Head of caudate nucleus (tissue), 42 donors: ENCODE measurements at regions of chr1 and their contacts with region 1.

Region 1: DNA sequence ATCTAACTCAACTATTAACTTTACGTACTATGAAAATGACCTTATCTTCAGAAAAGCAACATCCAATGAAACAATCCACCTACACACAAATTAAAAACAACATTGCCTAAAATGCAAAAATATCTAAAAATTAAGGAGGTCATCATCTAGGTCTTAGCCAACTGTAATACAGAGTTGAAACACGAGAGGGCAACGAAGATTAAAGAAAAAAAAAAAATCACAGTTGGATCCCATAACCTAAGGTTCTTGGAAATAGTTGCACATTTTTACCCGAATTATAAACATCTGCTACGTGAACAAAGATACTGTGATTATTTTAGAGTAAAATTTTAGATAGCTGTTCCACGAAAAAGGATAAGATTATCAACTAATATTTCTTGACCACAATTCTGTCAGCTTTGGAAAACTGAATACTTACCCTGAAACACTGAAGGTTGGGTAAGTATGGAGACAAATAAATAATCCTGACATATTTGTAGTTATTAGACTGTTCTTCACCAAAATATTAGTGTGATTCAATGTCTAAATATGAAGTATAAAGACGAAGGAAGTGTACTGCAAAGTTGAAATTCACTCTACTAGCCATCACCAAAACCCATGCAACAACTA is 88.0 kb upstream of the AK4 start:
- DNase-seq: no peak

Region 2: DNA sequence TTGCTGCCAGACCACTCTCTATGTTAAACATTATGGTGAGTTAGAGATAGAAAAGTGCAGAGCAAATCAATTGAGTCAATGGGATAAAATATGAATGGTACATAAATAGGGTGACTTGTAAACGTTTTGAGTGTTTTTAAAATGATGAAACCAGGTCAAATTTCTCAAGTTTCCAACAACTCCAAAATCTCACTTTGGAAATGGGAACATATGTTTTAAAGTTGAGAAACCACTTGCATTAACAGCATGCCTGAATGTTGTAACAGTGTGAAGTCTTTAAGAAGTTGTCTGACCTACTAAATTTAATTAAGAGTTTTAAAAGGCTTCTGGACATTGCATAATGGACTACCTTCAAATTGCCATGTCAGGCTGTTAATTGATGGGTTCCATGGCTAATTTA is 348.8 kb before region 1 on chr1:
- intact Hi-C with region 1: no loop called
- DNase-seq: no peak

Region 3: GRCh38 chr1:65108025-65108642 is 48.1 kb after region 1 on chr1:
- intact Hi-C with region 1: no loop called
- DNase-seq: no peak

Region 4: DNA sequence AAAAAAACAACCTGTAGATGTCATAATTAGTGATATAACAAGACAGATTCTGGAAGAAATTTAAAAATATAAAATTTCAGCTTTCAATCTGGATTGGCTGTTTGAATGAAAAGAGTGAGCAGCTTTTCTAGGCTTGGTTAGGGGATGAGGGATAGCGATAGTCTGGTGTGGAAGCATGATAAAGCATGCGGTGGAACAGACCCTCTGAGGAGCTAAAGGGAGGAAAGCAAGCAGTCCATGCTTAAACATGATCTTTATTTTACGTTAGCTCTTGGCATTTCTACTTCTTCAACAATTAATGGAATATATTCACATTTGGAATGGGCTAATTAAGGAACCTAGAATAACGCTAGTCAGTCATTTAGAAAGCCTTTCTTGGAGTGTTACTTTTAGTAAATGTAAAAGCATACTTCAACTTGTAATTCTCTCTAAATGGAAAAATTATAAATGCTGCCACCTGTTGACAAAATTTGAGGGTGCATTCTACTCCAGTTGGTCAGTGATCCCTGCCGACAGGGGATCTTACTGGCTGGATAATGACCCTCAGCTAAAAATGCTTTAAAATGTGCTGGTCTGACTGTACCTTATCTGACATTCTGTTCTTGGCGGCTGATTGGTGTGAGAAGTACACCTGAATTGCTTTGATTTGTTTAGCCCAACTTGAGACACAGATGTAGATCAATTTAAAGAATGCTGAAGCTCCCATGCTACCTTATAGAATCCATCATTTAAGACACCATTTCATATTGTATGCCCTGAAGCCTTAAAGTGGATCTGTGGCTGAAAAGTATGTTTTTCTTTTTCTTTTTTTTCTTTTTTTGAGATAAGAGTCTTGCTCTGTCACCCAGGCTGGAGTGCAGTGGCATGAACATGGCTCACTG is 149.2 kb after region 1 on chr1:
- intact Hi-C with region 1: loop called (anchors 5 kb)
- DNase-seq: peak in 13 of 42 donors; percentile 12 to 70 (median 27)